CD8-positive, alpha-beta T cell (primary cell): ENCODE measurements at regions of chr12 and their contacts with region 1.

Region 1: GRCh38 chr12:9750276-9751203 is 10.2 kb downstream of the CD69 start:
- DNase-seq: peak in 7 of 9 experiments; percentile 43 to 88 (median 58)
- ATAC-seq: peak; percentile 60
- H3K4me3 ChIP-seq: no peak overlapping the region
- H3K4me3 Mint-ChIP-seq: peak overlapping the region; percentile 59
- H3K27ac ChIP-seq: no peak overlapping the region
- H3K27ac Mint-ChIP-seq: peak overlapping the region; percentile 69
- H3K4me1 ChIP-seq: peaks cover 27% of the 10 kb centered on the region
- H3K4me1 Mint-ChIP-seq: peaks cover 48% of the 10 kb centered on the region
- H3K27me3 ChIP-seq: no peaks in the 10 kb centered on the region
- H3K27me3 Mint-ChIP-seq: no peaks in the 10 kb centered on the region
- CTCF ChIP-seq: peak; percentile 80

Region 2: DNA sequence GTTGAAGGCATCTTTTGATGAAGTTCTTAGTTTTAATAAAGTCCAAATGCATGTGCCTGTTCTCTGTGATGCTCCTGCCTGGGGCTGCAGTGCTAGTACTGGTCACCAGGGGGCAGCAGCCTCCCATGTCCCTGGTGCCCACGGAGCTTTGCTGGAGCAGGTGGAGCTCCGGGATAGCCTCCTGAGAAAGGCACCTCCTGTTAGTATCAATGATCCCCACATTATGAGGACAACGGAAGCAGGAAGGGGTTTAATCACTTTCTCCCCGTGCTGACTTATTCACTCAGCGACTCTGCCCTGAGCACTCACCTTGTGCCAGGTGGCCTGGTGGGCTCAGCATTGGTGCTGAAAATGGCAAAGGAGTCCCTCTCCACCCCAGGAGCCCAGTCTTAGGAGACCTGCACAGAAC is 419.3 kb before region 1 on chr12:
- CTCF ChIA-PET with region 1: interaction called, 17 read pairs
- POLR2A ChIA-PET with region 1: no interaction called
- intact Hi-C with region 1: no loop called
- DNase-seq: peak; percentile 45 to 82 (median 71)
- ATAC-seq: peak; percentile 81
- H3K4me3 ChIP-seq: no peak overlapping the region
- H3K4me3 Mint-ChIP-seq: no peak overlapping the region
- H3K27ac ChIP-seq: no peak overlapping the region
- H3K27ac Mint-ChIP-seq: no peak overlapping the region
- H3K4me1 ChIP-seq: peaks cover 17% of the 10 kb centered on the region
- H3K4me1 Mint-ChIP-seq: peaks cover 23% of the 10 kb centered on the region
- H3K27me3 ChIP-seq: no peaks in the 10 kb centered on the region
- H3K27me3 Mint-ChIP-seq: no peaks in the 10 kb centered on the region
- CTCF ChIP-seq: peak; percentile 94

Region 3: DNA sequence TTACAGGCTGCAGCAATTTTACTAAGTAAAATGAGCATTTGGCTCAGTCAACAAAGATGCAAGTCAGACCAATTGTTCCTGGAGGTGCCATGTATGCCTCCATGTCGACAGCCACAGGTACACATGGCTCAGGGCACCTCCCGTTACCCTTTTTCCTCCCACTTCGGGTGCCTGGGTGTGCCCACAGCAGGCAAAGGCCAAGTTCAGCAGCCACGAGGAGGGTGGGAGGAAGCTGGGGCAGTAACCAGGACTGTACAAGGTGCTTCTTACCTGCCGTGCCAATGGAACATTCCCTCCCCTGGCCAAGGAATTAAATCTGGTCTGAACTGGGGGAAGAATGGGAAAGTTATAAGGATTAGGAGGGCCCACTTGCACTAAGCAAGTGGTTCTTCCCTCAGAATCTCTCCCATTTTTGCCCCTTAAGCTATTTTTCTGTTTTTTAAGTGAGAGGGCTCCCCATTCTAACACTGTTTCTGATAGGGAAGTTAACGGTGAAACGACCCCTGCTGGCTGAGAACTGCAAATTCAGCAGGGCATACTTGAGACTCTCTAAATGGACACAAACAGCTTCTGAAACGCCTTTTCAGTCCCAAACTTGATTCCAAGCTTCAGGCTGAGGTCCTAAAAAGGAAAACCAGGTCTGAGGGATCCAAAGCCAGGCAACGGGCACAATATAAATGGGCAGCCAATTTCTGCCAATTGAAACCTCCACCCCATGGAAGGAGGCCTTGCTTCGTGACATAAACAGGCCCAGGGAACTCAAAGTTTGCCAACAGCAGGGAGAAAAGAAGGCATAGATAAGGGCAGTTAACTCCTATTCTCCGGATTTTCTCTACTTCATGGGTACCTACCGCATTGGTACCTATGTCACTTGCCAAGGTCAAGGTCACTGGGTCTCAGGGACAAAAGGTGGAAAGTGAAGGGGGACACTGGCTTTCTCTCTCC is 42.4 kb before region 1 on chr12:
- CTCF ChIA-PET with region 1: interaction called, 32 read pairs
- POLR2A ChIA-PET with region 1: no interaction called
- intact Hi-C with region 1: no loop called
- DNase-seq: peak; percentile 47 to 88 (median 73)
- ATAC-seq: peak; percentile 89
- H3K4me3 ChIP-seq: peak overlapping the region; percentile 5 to 21
- H3K4me3 Mint-ChIP-seq: peak overlapping the region; percentile 73
- H3K27ac ChIP-seq: peak overlapping the region; percentile 19 to 75
- H3K27ac Mint-ChIP-seq: peak overlapping the region; percentile 95
- H3K4me1 ChIP-seq: peaks cover 37% of the 10 kb centered on the region
- H3K4me1 Mint-ChIP-seq: peaks cover 62% of the 10 kb centered on the region
- H3K27me3 ChIP-seq: no peaks in the 10 kb centered on the region
- H3K27me3 Mint-ChIP-seq: no peaks in the 10 kb centered on the region
- CTCF ChIP-seq: peak; percentile 70

Region 4: GRCh38 chr12:9773216-9773877 is 22.8 kb after region 1 on chr12:
- CTCF ChIA-PET with region 1: interaction called, 31 read pairs
- POLR2A ChIA-PET with region 1: interaction called, 3 read pairs
- intact Hi-C with region 1: no loop called
- DNase-seq: peak in 1 of 9 experiments; percentile 60
- ATAC-seq: peak; percentile 71
- H3K4me3 ChIP-seq: no peak overlapping the region
- H3K4me3 Mint-ChIP-seq: peak overlapping the region; percentile 60
- H3K27ac ChIP-seq: peak overlapping the region in 1 of 2 experiments; percentile 3
- H3K27ac Mint-ChIP-seq: peak overlapping the region; percentile 70
- H3K4me1 ChIP-seq: peaks cover 39% of the 10 kb centered on the region
- H3K4me1 Mint-ChIP-seq: peaks cover 80% of the 10 kb centered on the region
- H3K27me3 ChIP-seq: no peaks in the 10 kb centered on the region
- H3K27me3 Mint-ChIP-seq: no peaks in the 10 kb centered on the region
- CTCF ChIP-seq: no peak

Region 5: GRCh38 chr12:9813821-9814809 is 63.6 kb after region 1 on chr12:
- CTCF ChIA-PET with region 1: interaction called, 138 read pairs
- POLR2A ChIA-PET with region 1: interaction called, 3 read pairs
- intact Hi-C with region 1: loop called (anchors 1 kb)
- DNase-seq: peak; percentile 85 to 98 (median 92)
- ATAC-seq: peak; percentile 98
- H3K4me3 ChIP-seq: peak overlapping the region; percentile 65 to 66
- H3K4me3 Mint-ChIP-seq: peak overlapping the region; percentile 87
- H3K27ac ChIP-seq: peak overlapping the region; percentile 38 to 59
- H3K27ac Mint-ChIP-seq: peak overlapping the region; percentile 88
- H3K4me1 ChIP-seq: peaks cover 7% of the 10 kb centered on the region
- H3K4me1 Mint-ChIP-seq: peaks cover 13% of the 10 kb centered on the region
- H3K27me3 ChIP-seq: no peaks in the 10 kb centered on the region
- H3K27me3 Mint-ChIP-seq: peaks cover 4% of the 10 kb centered on the region
- CTCF ChIP-seq: peak; percentile 82

Region 6: DNA sequence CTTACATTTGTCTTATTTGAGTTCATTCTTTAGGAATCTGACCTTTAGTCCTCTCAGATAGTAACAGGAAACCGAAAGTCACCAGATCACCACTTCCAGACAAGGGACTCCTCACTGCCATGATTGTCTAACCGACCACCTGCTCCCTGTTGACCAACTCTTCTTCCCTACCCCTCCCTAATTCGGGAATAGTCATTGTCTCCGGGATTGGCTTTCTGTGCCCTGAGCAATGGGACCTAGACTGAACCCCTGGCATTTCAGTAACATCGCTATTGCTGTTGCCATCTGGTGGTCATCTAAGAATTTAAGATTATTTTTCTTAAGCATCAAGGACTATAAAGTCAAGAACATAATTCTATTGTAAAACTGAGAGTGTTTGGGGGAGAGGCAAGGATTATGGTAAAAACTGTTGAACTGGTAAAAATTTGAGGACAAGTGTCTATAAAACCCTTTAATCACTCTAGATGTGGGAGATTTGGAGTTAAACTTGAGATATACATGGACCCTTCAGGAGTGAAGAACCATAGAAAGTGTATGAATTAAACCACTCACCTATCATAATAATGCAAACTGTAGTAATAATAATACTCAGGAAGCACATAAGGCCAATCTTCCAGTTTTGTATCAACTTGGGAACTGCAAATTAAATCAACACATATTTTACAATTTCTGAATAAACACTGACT is 175.3 kb after region 1 on chr12:
- CTCF ChIA-PET with region 1: interaction called, 63 read pairs
- POLR2A ChIA-PET with region 1: no interaction called
- intact Hi-C with region 1: loop called (anchors 1 kb)
- DNase-seq: peak in 6 of 9 experiments; percentile 5 to 74 (median 44)
- ATAC-seq: peak; percentile 59
- H3K4me3 ChIP-seq: peak overlapping the region; percentile 21 to 28
- H3K4me3 Mint-ChIP-seq: peak overlapping the region; percentile 77
- H3K27ac ChIP-seq: no peak overlapping the region
- H3K27ac Mint-ChIP-seq: peak overlapping the region; percentile 18
- H3K4me1 ChIP-seq: no peaks in the 10 kb centered on the region
- H3K4me1 Mint-ChIP-seq: peaks cover 12% of the 10 kb centered on the region
- H3K27me3 ChIP-seq: peaks cover 0 to 2% of the 10 kb centered on the region in 2 experiments
- H3K27me3 Mint-ChIP-seq: no peaks in the 10 kb centered on the region
- CTCF ChIP-seq: peak; percentile 62

Region 7: DNA sequence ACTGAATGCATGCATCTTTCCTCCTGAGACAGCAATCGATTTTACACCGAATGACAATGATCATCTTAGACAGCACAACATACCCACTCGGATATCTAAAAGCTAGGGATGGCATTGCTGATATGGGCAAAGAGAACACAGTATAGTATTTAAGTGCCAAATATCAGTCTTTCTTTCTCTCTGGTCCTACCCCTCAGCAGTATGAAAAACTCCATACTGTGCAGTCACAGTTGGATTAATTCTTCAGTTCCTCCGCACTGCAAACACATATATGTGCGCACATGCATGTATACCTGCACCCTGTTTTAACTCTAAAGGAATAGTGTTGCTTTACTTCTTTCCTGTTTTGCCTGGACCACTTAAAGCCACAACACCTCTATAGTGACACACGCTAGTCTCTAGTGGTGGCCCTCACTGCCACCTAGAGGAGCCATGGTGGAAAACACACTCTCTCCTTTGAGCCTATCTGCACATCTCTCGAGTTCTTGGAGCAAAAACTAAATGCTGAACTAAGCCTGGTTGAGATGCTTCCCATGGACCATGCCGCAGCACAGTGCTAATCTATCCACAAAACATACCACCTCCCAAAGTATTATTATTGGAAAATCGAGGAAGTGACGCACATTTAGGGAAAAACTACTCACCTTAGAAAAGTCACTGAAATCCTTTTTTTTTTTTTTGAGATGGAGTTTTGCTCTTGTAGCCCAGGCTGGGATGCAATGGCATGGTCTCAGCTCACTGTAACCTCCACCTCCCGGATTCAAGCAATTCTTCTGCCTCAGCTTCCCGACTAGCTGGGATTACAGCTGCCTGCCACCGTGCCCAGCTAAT is 440.2 kb after region 1 on chr12:
- CTCF ChIA-PET with region 1: interaction called, 3 read pairs
- POLR2A ChIA-PET with region 1: no interaction called
- intact Hi-C with region 1: loop called (anchors 2 kb)
- DNase-seq: peak in 8 of 9 experiments; percentile 30 to 77 (median 58)
- ATAC-seq: peak; percentile 99
- H3K4me3 ChIP-seq: no peak overlapping the region
- H3K4me3 Mint-ChIP-seq: no peak overlapping the region
- H3K27ac ChIP-seq: no peak overlapping the region
- H3K27ac Mint-ChIP-seq: no peak overlapping the region
- H3K4me1 ChIP-seq: no peaks in the 10 kb centered on the region
- H3K4me1 Mint-ChIP-seq: peaks cover 6% of the 10 kb centered on the region
- H3K27me3 ChIP-seq: peaks cover 0 to 5% of the 10 kb centered on the region in 2 experiments
- H3K27me3 Mint-ChIP-seq: peaks cover 12% of the 10 kb centered on the region
- CTCF ChIP-seq: peak; percentile 83

Region 8: GRCh38 chr12:10740182-10740581 is 989.6 kb after region 1 on chr12:
- CTCF ChIA-PET with region 1: no interaction called
- POLR2A ChIA-PET with region 1: no interaction called
- intact Hi-C with region 1: no loop called
- DNase-seq: no peak
- ATAC-seq: no peak
- H3K4me3 ChIP-seq: no peak overlapping the region
- H3K4me3 Mint-ChIP-seq: no peak overlapping the region
- H3K27ac ChIP-seq: no peak overlapping the region
- H3K27ac Mint-ChIP-seq: no peak overlapping the region
- H3K4me1 ChIP-seq: no peaks in the 10 kb centered on the region
- H3K4me1 Mint-ChIP-seq: no peaks in the 10 kb centered on the region
- H3K27me3 ChIP-seq: no peaks in the 10 kb centered on the region
- H3K27me3 Mint-ChIP-seq: peaks cover 2% of the 10 kb centered on the region
- CTCF ChIP-seq: no peak